Posterior vena cava (tissue), 2 donors: ENCODE measurements at regions of chrX and their contacts with region 1.

Region 1: GRCh38 chrX:155108427-155108826 is 37.1 kb downstream of the BRCC3 start:
- DNase-seq: no peak

Region 2: DNA sequence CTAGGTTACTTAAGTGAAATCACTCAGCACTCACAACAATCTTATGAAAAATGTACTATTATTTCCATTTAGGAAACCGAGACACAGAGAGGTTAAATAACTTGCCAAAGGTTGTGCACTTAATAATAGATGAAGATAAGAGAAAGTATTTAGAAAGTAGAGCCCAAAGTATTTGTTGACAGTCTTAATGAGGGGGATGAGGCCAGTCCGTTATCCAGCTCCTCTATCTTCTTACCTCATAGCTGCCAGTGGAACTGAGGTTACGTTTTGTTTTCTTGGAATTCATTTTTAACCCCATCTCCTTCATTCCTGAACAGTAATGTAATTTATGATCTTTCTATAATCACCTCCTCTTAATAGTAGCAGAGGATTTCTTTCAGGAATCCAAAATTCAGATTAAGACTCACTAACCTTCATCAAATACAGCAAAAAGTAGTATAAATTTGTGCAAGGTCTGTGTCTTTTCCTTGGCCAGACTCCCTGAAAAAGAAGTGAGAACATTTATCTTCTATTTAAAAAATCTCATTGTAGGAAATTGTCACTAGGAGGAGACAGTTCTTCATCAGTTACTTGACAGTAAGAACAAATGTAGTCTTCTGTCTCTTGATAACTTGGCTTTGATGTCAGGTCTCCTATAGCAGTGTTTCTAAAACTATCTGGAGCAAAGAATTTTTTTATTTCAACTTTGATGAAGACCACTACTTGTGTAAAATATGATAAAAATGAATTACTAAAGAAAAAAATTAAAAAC is 121.4 kb before region 1 on chrX:
- intact Hi-C with region 1: no loop called
- DNase-seq: no peak

Region 3: DNA sequence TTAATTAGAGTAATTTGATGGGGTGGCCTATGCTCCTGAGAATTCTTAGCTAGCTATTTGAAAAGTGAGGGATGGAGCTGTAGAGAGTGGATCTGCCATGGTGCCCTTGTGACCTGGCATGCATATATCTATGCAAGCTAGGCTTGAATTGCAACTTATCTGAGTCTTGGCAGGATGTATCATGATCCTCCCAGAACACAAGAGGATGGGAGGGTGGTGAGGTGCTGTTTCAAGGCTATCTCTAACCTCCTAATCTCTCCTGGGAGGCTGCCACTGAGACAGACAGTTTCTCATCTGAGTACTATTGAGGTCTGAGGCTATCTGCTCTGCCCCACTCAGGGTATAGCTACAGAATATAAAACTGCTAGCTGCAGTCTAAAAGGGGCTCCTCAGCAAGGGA is 19.5 kb after region 1 on chrX:
- intact Hi-C with region 1: loop called in 1 of 2 experiments (anchors 1 kb)
- DNase-seq: no peak

Region 4: GRCh38 chrX:155263854-155264628 is 155.6 kb after region 1 on chrX and contains the start of gene RAB39B:
- intact Hi-C with region 1: no loop called
- DNase-seq: peak; percentile 87
- total RNA-seq, gene RAB39B: 0.19 TPM